Gastrocnemius medialis (tissue), 4 donors: ENCODE measurements at regions of chr16 and their contacts with region 1.

Region 1: DNA sequence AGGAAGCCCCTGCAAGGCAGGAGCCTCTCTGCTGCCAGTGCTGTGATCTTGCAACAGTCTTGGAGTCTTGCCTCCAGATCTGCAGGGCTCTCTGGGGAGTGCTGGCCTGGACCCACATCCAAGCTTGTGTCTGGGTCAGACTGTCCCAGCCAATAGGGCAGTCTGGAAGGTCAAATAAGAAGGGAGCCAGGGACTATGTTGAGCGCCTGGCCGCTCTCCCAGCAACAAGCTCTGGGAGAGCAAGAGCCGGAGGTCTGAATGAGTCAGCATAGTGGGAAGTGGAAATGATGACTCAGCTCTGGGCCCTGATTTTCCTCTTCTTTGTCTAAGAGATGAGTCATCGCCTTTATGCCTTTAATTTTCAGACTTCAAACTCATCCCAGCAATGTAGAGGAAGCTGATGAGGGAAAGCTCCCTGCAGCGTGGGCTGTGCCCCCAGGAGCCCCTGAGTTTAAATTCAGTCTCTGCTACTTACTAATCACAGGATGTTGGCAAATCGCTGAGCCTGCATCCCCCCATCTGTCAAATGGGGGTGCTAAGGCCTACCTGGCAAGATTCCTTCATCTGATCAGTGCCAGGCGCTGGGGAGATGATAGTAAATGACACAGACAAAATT is 43.6 kb upstream of the HAPSTR1 start:
- DNase-seq: peak; percentile 84 to 96
- ATAC-seq: peak; percentile 98 to 99
- H3K4me3 ChIP-seq: no peak overlapping the region
- H3K27ac ChIP-seq: peak overlapping the region; percentile 83 to 93 (median 86)
- H3K4me1 ChIP-seq: peaks cover 12 to 16% of the 10 kb centered on the region in 2 donors
- H3K27me3 ChIP-seq: no peaks in the 10 kb centered on the region
- CTCF ChIP-seq: no peak
- POLR2A ChIP-seq: no peak

Region 2: DNA sequence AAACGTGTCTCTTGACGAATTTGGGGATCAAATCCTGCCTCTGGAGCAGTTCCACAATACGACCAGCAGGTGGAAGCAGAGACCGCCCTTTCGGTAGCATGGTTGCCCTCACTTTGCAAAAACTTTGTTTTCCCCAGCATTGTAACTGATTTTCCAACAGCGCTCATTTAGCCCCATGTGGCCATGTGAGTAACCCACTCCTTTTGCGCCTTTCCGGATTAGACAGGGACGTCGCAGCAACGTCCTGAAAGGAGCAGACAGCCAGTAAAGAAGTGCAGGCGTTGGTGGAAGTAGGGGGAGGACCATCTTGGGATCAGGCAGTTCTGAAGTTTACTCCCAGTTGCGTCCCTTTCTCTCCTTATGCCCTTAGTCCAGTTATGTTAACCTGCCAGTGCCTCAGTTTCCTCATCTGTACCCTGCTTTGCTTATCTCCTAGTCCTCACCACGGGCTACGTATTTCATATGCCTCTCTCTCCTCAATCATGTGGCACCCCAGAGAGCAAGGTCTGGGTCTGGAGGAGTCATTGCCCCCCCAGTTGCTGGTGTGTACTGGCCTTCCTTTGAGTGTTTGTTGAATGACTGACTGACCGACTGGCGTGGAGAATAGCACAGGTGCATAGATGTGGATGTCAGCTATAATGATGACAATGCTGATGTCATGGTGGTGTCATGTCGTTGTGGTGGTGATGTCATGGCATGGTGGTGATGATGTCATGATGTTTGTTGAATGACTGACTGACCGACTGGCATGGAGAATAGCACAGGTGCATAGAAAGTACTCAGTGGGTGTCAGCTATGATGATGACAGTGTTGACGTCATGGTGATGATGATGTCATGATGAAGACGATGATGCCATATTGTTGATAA is 479.8 kb before region 1 on chr16:
- in situ Hi-C with region 1: no loop called
- intact Hi-C with region 1: no loop called
- DNase-seq: peak; percentile 29 to 43
- ATAC-seq: peak; percentile 81 to 93
- H3K4me3 ChIP-seq: no peak overlapping the region
- H3K27ac ChIP-seq: no peak overlapping the region
- H3K4me1 ChIP-seq: no peaks in the 10 kb centered on the region
- H3K27me3 ChIP-seq: peaks cover 0 to 16% (median 7%) of the 10 kb centered on the region in 3 donors
- CTCF ChIP-seq: peak; percentile 88 to 95 (median 91)
- POLR2A ChIP-seq: no peak

Region 3: DNA sequence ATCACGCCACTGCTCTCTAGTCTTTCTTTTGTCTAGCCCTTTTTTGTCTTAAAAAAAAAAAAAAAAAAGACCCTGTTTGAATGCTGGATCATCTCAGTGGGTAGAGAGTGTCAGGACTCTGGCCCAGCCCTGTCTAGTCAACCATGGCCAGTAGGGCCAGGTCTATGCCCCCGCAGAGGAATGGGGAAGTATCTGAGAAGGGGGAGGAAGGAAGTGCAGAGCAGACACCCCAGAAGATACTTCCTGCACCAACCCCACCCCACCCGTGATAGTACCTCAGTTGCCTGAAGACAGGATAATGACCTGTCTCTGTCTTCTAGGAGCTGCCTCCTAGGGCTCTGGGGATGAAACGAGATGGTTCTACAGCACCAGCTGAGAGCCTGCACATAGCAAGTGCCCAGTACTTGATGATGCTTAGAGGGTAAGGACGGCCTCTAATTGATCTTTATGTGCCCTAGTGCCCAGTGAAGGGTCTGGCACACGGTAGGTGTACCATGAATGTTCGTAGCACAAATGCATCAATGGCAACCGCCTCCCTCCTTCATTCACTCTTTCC is 317.9 kb before region 1 on chr16:
- in situ Hi-C with region 1: no loop called
- intact Hi-C with region 1: no loop called
- DNase-seq: no peak
- ATAC-seq: no peak
- H3K4me3 ChIP-seq: no peak overlapping the region
- H3K27ac ChIP-seq: no peak overlapping the region
- H3K4me1 ChIP-seq: no peaks in the 10 kb centered on the region
- H3K27me3 ChIP-seq: no peaks in the 10 kb centered on the region
- CTCF ChIP-seq: no peak
- POLR2A ChIP-seq: no peak

Region 4: GRCh38 chr16:8963825-8964441 is 83.9 kb before region 1 on chr16 and contains the start of gene USP7:
- in situ Hi-C with region 1: no loop called
- intact Hi-C with region 1: loop called (anchors 5 kb)
- DNase-seq: peak; percentile 82 to 88
- ATAC-seq: peak; percentile 80 to 85
- H3K4me3 ChIP-seq: peak within 1 kb of the TSS; percentile 63 to 75 (median 70)
- H3K27ac ChIP-seq: peak within 1 kb of the TSS; percentile 80 to 86 (median 84)
- H3K4me1 ChIP-seq: peaks cover 35 to 40% of the 10 kb centered on the region in 2 donors
- H3K27me3 ChIP-seq: no peaks in the 10 kb centered on the region
- CTCF ChIP-seq: no peak
- POLR2A ChIP-seq: peak; percentile 63 to 73
- total RNA-seq, gene USP7: 79.7 to 99.2 (median 85.6) TPM

Region 5: GRCh38 chr16:9090960-9091866 is 43.4 kb after region 1 on chr16 and contains the start of gene HAPSTR1:
- in situ Hi-C with region 1: no loop called
- intact Hi-C with region 1: loop called (anchors 2 kb)
- DNase-seq: peak; percentile 100
- ATAC-seq: peak; percentile 91 to 93
- H3K4me3 ChIP-seq: peak within 1 kb of the TSS; percentile 79 to 87 (median 83)
- H3K27ac ChIP-seq: peak within 1 kb of the TSS; percentile 98 to 100 (median 99)
- H3K4me1 ChIP-seq: peaks cover 34 to 42% of the 10 kb centered on the region in 2 donors
- H3K27me3 ChIP-seq: no peaks in the 10 kb centered on the region
- CTCF ChIP-seq: no peak
- POLR2A ChIP-seq: peak; percentile 97 to 99
- total RNA-seq, gene HAPSTR1: 55.0 to 65.0 (median 60.9) TPM

Region 6: DNA sequence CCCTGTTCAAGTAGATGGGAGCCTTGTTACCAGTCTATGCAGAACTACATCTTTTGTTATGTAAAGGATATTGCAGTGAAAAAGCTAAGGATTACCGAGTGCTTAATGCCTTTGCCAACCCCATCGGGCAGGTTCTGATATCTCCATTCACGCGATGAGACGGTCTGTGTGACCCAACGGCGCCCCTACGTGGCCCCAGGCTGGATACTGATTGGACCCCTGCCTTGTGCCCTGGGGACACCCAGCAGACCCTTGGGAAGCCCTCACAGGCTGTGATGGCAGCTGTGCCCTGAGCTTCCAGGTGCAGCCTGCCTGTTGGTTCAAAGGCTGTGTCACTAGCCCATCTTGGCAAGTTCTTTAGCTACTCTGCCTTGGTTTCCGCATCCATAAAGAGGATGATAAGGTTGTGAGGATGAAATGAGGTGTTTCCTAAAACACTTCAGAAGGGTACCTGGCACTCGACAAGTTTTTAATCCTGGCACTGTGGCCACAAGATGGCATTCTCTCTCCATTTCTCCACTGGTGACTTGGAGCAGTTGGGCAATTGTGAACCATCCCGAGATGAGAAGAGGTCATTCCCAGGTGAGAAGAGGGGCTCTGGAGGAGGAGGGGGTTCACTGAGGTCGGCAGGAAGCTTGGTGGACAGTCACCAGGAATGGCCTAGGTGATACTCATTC is 77.3 kb after region 1 on chr16:
- in situ Hi-C with region 1: no loop called
- intact Hi-C with region 1: loop called (anchors 5 kb)
- DNase-seq: no peak
- ATAC-seq: no peak
- H3K4me3 ChIP-seq: no peak overlapping the region
- H3K27ac ChIP-seq: peak overlapping the region in 2 of 4 donors; percentile 53 to 68
- H3K4me1 ChIP-seq: peaks cover 44 to 46% of the 10 kb centered on the region in 2 donors
- H3K27me3 ChIP-seq: no peaks in the 10 kb centered on the region
- CTCF ChIP-seq: no peak
- POLR2A ChIP-seq: no peak

Region 7: GRCh38 chr16:9365376-9365728 is 317.6 kb after region 1 on chr16:
- in situ Hi-C with region 1: no loop called
- intact Hi-C with region 1: loop called (anchors 10 kb)
- DNase-seq: peak; percentile 75 to 85
- ATAC-seq: peak; percentile 99
- H3K4me3 ChIP-seq: no peak overlapping the region
- H3K27ac ChIP-seq: peak overlapping the region; percentile 41 to 75 (median 60)
- H3K4me1 ChIP-seq: peaks cover 4 to 11% of the 10 kb centered on the region in 2 donors
- H3K27me3 ChIP-seq: no peaks in the 10 kb centered on the region
- CTCF ChIP-seq: no peak
- POLR2A ChIP-seq: no peak

Region 8: DNA sequence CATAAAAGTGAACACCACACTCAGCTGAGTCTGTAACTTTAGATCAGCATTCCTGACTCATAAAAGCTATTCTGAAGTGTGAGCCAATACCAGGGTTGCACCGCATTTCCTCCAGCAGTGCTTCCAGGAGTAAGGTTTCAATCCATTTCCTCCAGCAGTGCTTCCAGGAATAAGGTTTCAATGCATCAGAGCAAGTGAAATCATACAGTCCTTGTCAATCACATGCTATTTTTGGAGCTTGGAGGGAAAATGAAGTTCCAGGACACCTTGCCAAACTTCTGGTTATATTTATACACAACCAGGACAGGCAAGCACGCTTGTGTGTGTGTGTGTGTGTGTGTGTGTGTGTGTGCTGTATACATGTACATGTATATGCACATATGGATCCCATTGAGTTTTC is 806.9 kb after region 1 on chr16:
- in situ Hi-C with region 1: no loop called
- intact Hi-C with region 1: loop called (anchors 10 kb)
- DNase-seq: peak; percentile 38 to 81
- ATAC-seq: peak; percentile 98
- H3K4me3 ChIP-seq: no peak overlapping the region
- H3K27ac ChIP-seq: peak overlapping the region; percentile 25 to 62 (median 55)
- H3K4me1 ChIP-seq: peaks cover 6 to 13% of the 10 kb centered on the region in 2 donors
- H3K27me3 ChIP-seq: no peaks in the 10 kb centered on the region
- CTCF ChIP-seq: no peak
- POLR2A ChIP-seq: no peak